CD14-positive monocyte (primary cell): ENCODE measurements at regions of chr5 and their contacts with region 1.

Region 1: DNA sequence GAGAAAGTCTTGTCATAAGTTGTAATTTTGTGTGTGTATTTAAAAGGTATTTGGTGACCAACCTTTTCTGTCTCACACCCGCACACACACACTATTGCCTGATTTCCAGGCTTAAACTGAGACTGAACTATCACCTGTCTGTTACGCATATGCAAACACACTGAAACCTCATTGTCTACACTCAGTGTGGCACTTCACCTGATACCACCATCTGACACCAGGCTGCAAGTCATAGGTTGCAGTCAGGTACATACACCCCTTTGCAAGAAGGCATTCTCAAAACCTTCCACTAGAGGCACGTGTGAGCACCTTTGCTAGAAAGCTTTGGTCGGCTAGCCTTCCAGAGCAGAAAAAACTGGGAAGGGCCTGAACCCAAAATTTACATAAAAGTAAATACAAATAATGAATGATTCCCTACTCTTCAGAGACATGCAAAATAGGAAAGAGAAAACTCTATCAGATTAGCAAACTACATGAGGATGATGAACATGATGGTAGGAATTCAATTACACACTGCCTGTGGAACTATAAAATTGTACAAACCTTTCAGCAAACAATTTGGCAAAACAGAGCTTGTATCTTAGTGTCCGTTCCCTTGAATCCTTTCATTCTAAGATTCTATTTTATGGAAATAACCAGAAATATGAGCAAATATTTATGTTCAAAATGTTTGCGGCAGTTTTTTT is 5.9 kb upstream of the FOXD1 start:
- DNase-seq: peak in 2 of 3 donors; percentile 20 to 29
- H3K4me3 ChIP-seq: no peak overlapping the region
- H3K4me3 Mint-ChIP-seq: peak overlapping the region in 1 of 2 donors; percentile 77
- H3K27ac ChIP-seq: no peak overlapping the region
- H3K27ac Mint-ChIP-seq: no peak overlapping the region
- H3K4me1 ChIP-seq: peaks cover 8 to 10% of the 10 kb centered on the region in 2 donors
- H3K4me1 Mint-ChIP-seq: peaks cover 5% of the 10 kb centered on the region
- H3K27me3 ChIP-seq: peaks cover 79 to 83% of the 10 kb centered on the region in 2 donors
- H3K27me3 Mint-ChIP-seq: peaks cover 73 to 79% (median 75%) of the 10 kb centered on the region in 3 donors
- CTCF ChIP-seq: peak; percentile 84

Region 2: DNA sequence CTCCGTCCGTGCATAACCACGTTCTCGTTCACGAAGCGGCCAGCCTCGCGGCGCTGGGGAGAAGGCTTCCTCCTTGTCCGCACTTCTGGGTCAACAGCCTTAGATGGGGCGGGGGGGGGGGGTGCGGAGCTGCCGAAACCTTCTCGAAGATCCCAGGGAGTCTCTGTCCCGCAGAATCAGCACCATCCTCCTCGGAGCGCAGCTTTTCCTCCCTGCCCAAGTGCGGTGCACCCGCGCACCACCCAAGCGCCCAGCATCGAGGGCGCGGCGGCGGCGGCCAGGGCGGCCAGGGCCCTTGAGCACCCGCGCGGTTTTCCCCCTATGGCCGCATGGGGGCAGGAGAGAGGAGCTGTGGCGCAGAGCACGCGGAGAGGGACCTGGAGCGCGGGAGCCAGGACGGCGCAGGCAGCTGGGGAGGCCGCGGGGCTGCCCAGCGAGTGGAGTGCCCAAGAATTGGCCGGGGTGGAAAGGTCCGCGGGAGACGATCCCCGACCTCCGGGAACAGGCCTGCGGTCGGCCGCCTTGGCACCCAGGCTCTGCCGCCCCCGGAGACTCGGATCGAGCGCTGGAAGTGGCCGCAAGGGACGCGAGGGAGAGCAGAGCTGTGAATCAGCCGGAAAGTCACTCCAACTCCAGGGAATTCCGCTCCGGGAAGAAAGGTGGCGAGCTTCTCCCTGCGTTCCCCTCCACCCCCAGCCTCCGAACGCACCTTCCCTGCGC is 238.4 kb before region 1 on chr5:
- intact Hi-C with region 1: loop called in 1 of 2 experiments (anchors 5 kb)
- DNase-seq: peak; percentile 23 to 37 (median 31)
- H3K4me3 ChIP-seq: peak overlapping the region; percentile 8 to 63 (median 38)
- H3K4me3 Mint-ChIP-seq: peak overlapping the region; percentile 74 to 90
- H3K27ac ChIP-seq: no peak overlapping the region
- H3K27ac Mint-ChIP-seq: no peak overlapping the region
- H3K4me1 ChIP-seq: peaks cover 6 to 7% of the 10 kb centered on the region in 2 donors
- H3K4me1 Mint-ChIP-seq: peaks cover 9% of the 10 kb centered on the region
- H3K27me3 ChIP-seq: peaks cover 64 to 75% of the 10 kb centered on the region in 2 donors
- H3K27me3 Mint-ChIP-seq: peaks cover 68 to 90% (median 75%) of the 10 kb centered on the region in 3 donors
- CTCF ChIP-seq: peak; percentile 77

Region 3: DNA sequence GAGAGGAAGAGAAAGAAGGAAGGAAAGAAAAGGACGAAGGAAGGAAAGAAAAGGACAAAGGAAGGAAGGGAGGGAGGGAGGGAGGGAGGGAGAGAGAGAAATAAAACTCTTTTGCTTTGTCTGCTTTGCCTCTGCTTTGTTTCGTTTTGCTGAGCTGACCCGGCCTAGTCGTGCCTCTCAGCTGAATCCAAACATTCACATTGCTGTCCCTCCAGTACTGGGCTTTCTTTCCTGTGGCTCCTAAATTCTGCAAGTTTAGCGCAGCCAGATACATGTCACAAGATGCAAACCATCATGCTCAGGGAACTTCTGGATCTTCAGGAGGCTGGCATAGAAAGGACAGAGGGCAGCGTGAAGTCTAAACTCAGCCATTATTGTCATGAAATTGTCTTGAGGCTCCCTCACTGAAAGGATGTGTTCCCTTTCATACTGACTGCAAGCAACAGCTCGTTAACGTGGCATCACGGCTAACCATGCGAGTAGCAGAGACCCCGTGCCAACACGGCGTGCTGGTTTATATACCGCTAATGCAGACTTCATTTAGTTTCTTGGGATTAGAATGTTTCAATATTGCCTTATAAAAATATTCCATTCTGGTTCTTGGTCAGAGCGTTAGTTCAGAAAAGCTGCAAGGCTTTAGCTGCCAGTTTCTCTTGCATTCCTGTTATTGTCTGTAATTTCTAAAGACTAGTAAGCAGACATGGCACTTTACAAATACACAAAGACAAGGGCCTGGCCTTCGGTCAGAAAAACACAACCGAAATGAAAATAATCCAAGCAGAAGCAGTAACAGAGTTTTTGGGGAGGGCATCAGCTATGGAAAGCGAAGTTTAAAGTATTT is 187.3 kb before region 1 on chr5:
- intact Hi-C with region 1: no loop called
- DNase-seq: no peak
- H3K4me3 ChIP-seq: no peak overlapping the region
- H3K4me3 Mint-ChIP-seq: peak overlapping the region in 1 of 2 donors; percentile 56
- H3K27ac ChIP-seq: no peak overlapping the region
- H3K27ac Mint-ChIP-seq: no peak overlapping the region
- H3K4me1 ChIP-seq: no peaks in the 10 kb centered on the region
- H3K4me1 Mint-ChIP-seq: no peaks in the 10 kb centered on the region
- H3K27me3 ChIP-seq: peaks cover 13 to 18% of the 10 kb centered on the region in 2 donors
- H3K27me3 Mint-ChIP-seq: peaks cover 8 to 36% (median 12%) of the 10 kb centered on the region in 3 donors
- CTCF ChIP-seq: no peak

Region 4: DNA sequence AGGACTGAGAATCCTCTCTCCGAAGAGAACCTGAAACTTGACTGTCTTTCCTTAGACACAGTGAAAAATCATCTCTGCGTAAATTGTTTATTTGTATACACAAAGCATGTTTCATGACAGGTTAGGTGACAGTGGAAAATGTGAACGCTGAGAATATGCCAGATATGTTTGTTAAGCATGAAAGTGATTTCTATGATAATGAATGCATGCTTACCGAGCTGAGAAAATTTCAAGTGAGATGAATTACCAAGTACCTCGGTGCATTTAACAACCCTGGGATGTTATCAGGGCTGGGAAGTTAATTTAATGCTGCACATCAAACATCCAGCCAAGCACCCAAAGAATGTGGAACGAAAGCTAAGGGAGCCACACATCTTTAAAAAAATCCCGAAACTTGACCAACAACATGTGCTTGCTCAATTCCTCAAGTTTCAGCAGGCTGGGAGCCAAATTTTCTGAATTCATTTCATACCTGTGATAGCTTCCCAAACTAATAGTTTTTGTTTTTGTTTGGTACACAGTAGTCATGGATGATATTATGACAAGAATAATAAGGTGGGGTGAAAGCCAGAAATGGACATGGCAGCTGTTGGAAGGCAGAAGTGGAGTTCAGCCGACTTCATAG is 508.4 kb after region 1 on chr5:
- intact Hi-C with region 1: no loop called
- DNase-seq: no peak
- H3K4me3 ChIP-seq: no peak overlapping the region
- H3K4me3 Mint-ChIP-seq: no peak overlapping the region
- H3K27ac ChIP-seq: no peak overlapping the region
- H3K27ac Mint-ChIP-seq: no peak overlapping the region
- H3K4me1 ChIP-seq: no peaks in the 10 kb centered on the region
- H3K4me1 Mint-ChIP-seq: no peaks in the 10 kb centered on the region
- H3K27me3 ChIP-seq: no peaks in the 10 kb centered on the region
- H3K27me3 Mint-ChIP-seq: peaks cover 0 to 8% (median 2%) of the 10 kb centered on the region in 3 donors
- CTCF ChIP-seq: no peak